Naive thymus-derived CD4-positive, alpha-beta T cell (primary cell): ENCODE measurements at regions of chr5 and their contacts with region 1.

Region 1: GRCh38 chr5:77645158-77645994 is 6.9 kb upstream of the OTP start:
- DNase-seq: peak in 2 of 9 donors; percentile 51 to 66
- ATAC-seq: peak; percentile 83
- H3K4me3 ChIP-seq: no peak overlapping the region
- H3K4me3 Mint-ChIP-seq: peak overlapping the region; percentile 45 to 83 (median 72)
- H3K27ac ChIP-seq: no peak overlapping the region
- H3K27ac Mint-ChIP-seq: peak overlapping the region in 1 of 9 donors; percentile 12
- H3K4me1 ChIP-seq: peaks cover 7 to 9% of the 10 kb centered on the region in 2 donors
- H3K4me1 Mint-ChIP-seq: peaks cover 13 to 29% (median 19%) of the 10 kb centered on the region in 7 donors
- H3K27me3 ChIP-seq: peaks cover 17 to 43% of the 10 kb centered on the region in 2 donors
- H3K27me3 Mint-ChIP-seq: peaks cover 92 to 95% (median 94%) of the 10 kb centered on the region in 5 donors

Region 2: DNA sequence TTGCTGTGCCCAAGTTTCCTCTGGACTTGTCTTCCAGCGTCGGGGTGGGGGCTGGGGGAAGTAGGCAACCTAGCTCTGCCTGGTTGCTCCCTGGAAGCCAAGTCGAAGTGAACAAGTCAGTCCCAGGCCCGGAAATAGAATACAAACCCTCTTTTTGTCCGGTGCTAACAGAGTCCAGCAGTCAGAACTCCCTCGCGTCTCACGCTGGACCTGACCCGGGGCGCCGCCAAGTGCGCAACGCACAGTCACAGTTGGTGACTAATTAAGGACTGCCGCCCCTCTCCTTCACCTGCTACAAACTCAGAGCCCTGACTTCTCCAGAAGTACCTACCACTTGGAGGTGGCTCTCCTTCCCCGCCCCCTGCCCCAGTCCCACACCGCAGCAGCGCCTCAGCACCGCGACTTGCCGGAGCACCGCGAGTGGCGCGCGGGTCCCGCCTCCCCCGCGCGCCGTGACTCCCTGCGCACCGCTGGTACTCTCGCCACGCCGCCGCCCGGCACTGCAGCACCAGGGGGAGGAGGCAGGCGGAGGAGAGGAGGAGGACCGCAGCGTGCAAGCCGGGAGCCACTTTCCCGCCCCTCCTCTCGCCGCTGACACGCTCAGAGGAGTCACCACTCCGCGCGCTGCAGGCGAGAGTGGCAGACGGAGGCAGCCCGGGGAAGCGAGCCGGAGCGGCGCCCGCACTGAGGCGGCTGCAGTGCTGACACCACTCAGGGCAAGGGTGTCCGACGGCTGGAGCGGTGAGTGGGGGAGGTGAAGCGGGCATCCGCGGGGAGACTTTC is 1562.4 kb before region 1 on chr5 and contains the start of gene SV2C:
- CTCF ChIA-PET with region 1: no interaction called
- POLR2A ChIA-PET with region 1: no interaction called
- intact Hi-C with region 1: loop called in 1 of 2 experiments (anchors 10 kb)
- DNase-seq: peak in 2 of 9 donors; percentile 16 to 52
- ATAC-seq: peak; percentile 22
- H3K4me3 ChIP-seq: no peak within 1 kb of the TSS
- H3K4me3 Mint-ChIP-seq: peak within 1 kb of the TSS; percentile 21 to 80 (median 66)
- H3K27ac ChIP-seq: no peak within 1 kb of the TSS
- H3K27ac Mint-ChIP-seq: peak within 1 kb of the TSS in 1 of 9 donors; percentile 23
- H3K4me1 ChIP-seq: peaks cover 6 to 11% of the 10 kb centered on the region in 2 donors
- H3K4me1 Mint-ChIP-seq: peaks cover 16 to 36% (median 23%) of the 10 kb centered on the region in 7 donors
- H3K27me3 ChIP-seq: peaks cover 0 to 2% of the 10 kb centered on the region in 2 donors
- H3K27me3 Mint-ChIP-seq: peaks cover 70 to 89% (median 77%) of the 10 kb centered on the region in 5 donors
- total RNA-seq, gene SV2C: not detected

Region 3: GRCh38 chr5:77607324-77607723 is 38.1 kb before region 1 on chr5:
- CTCF ChIA-PET with region 1: no interaction called
- POLR2A ChIA-PET with region 1: no interaction called
- intact Hi-C with region 1: no loop called
- DNase-seq: no peak
- ATAC-seq: no peak
- H3K4me3 ChIP-seq: no peak overlapping the region
- H3K4me3 Mint-ChIP-seq: no peak overlapping the region
- H3K27ac ChIP-seq: no peak overlapping the region
- H3K27ac Mint-ChIP-seq: no peak overlapping the region
- H3K4me1 ChIP-seq: no peaks in the 10 kb centered on the region
- H3K4me1 Mint-ChIP-seq: no peaks in the 10 kb centered on the region
- H3K27me3 ChIP-seq: peaks cover 0 to 4% of the 10 kb centered on the region in 2 donors
- H3K27me3 Mint-ChIP-seq: peaks cover 22 to 63% (median 57%) of the 10 kb centered on the region in 5 donors

Region 4: DNA sequence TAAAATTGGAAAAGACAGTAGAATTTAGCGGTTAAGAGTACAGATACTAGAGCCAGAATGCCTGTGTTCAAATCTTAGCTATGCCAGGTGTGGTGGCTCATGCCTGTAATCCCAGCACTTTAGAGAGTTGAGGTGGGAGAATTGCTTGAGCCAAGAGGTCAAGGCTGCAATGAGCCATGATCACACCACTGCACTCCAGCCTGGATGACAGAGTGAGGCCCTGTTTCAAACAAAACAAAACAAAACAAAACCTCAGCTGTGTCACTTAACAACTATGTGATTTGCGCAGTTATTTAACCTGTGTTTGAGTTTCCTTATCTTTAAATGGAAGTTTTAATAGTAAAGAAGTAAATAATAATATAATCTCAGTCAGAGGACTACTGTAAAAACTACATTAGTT is 62.4 kb after region 1 on chr5:
- CTCF ChIA-PET with region 1: no interaction called
- POLR2A ChIA-PET with region 1: no interaction called
- intact Hi-C with region 1: no loop called
- DNase-seq: no peak
- ATAC-seq: no peak
- H3K4me3 ChIP-seq: no peak overlapping the region
- H3K4me3 Mint-ChIP-seq: no peak overlapping the region
- H3K27ac ChIP-seq: no peak overlapping the region
- H3K27ac Mint-ChIP-seq: no peak overlapping the region
- H3K4me1 ChIP-seq: peaks cover 0 to 4% of the 10 kb centered on the region in 2 donors
- H3K4me1 Mint-ChIP-seq: peaks cover 0 to 10% (median 4%) of the 10 kb centered on the region in 7 donors
- H3K27me3 ChIP-seq: no peaks in the 10 kb centered on the region
- H3K27me3 Mint-ChIP-seq: no peaks in the 10 kb centered on the region

Region 5: GRCh38 chr5:77852514-77853352 is 207.4 kb after region 1 on chr5:
- CTCF ChIA-PET with region 1: no interaction called
- POLR2A ChIA-PET with region 1: no interaction called
- intact Hi-C with region 1: loop called (anchors 5 to 10 kb)
- DNase-seq: peak in 8 of 9 donors; percentile 6 to 45 (median 30)
- ATAC-seq: peak; percentile 79
- H3K4me3 ChIP-seq: peak overlapping the region; percentile 42
- H3K4me3 Mint-ChIP-seq: peak overlapping the region; percentile 79 to 92 (median 84)
- H3K27ac ChIP-seq: no peak overlapping the region
- H3K27ac Mint-ChIP-seq: peak overlapping the region in 8 of 9 donors; percentile 2 to 86 (median 48)
- H3K4me1 ChIP-seq: peaks cover 0 to 13% of the 10 kb centered on the region in 2 donors
- H3K4me1 Mint-ChIP-seq: peaks cover 10 to 30% (median 18%) of the 10 kb centered on the region in 7 donors
- H3K27me3 ChIP-seq: no peaks in the 10 kb centered on the region
- H3K27me3 Mint-ChIP-seq: peaks cover 16 to 74% (median 55%) of the 10 kb centered on the region in 5 donors

Region 6: DNA sequence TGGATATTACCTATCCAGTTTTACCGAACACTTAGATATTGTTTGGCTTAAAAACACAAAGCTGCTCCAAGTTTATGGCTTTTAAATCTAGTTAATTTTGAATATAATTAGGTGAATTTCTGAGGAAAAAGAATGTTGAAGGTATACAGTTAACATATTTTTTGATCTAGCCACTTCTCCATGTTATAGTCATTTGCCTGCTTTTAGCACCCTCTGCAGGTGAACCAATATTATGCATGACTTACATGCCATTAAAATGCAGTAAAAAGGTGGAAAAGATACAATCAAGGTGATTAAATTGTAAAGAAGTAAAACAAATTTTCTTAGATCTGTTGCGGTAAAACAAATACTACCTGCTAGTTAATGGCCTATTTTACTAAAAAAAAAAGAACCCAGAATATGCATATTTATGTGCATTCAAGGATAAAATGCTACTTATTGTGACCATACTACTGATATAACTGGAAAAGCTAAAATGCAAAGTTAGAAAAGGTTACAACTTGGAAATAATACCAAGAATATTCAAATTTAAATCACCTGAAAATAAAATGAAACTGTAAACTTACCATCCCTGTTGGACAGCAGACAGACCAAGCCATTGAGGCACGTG is 517.0 kb after region 1 on chr5:
- CTCF ChIA-PET with region 1: no interaction called
- POLR2A ChIA-PET with region 1: no interaction called
- intact Hi-C with region 1: loop called in 1 of 2 experiments (anchors 2 kb)
- DNase-seq: peak in 5 of 9 donors; percentile 5 to 20 (median 13)
- ATAC-seq: no peak
- H3K4me3 ChIP-seq: no peak overlapping the region
- H3K4me3 Mint-ChIP-seq: no peak overlapping the region
- H3K27ac ChIP-seq: no peak overlapping the region
- H3K27ac Mint-ChIP-seq: no peak overlapping the region
- H3K4me1 ChIP-seq: no peaks in the 10 kb centered on the region
- H3K4me1 Mint-ChIP-seq: no peaks in the 10 kb centered on the region
- H3K27me3 ChIP-seq: no peaks in the 10 kb centered on the region
- H3K27me3 Mint-ChIP-seq: no peaks in the 10 kb centered on the region

Region 7: DNA sequence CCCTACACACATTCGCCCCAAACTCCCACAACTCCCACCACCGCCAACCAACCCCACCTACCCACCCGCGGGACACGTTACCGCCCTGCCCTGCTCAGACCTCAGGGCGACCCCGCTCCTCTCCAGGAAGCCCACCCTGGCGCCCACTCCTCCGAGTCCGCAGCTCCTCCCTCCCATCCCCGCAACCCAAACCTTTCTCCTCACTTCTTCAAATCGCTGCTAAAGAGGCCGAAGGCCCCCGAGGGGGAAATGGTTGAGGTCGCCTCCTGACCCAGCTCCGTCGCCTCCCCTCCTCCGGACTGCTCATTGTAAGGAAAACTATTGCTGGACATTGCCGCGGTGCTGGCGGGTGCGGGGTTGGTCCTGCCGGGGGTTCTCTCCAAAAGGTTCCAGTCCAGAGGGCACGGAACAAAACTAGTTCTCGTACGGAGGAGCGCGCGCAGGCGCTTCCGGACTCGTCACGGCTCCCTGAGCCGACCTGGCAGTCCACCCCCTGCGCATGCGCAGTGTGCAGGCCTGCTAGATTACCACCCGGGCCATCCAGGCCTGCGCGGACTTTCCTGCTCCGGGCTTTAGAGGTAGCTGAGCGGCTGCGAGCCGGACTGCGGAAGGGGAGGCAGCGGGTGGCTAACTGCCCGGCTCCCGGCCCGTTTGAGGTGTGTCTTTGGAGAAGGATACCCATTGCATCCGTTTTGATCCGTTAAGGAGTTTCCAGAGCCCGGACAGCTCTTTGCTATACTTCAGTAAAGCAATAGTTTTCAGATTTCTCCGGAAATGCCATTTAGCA is 649.1 kb after region 1 on chr5 and contains the start of gene AP3B1:
- CTCF ChIA-PET with region 1: no interaction called
- POLR2A ChIA-PET with region 1: no interaction called
- intact Hi-C with region 1: loop called (anchors 10 kb)
- DNase-seq: peak; percentile 94 to 98 (median 96)
- ATAC-seq: peak; percentile 97
- H3K4me3 ChIP-seq: peak within 1 kb of the TSS; percentile 98
- H3K4me3 Mint-ChIP-seq: peak within 1 kb of the TSS; percentile 86 to 100 (median 98)
- H3K27ac ChIP-seq: peak within 1 kb of the TSS; percentile 88
- H3K27ac Mint-ChIP-seq: peak within 1 kb of the TSS; percentile 77 to 99 (median 97)
- H3K4me1 ChIP-seq: peaks cover 5 to 9% of the 10 kb centered on the region in 2 donors
- H3K4me1 Mint-ChIP-seq: peaks cover 27 to 50% (median 46%) of the 10 kb centered on the region in 7 donors
- H3K27me3 ChIP-seq: no peaks in the 10 kb centered on the region
- H3K27me3 Mint-ChIP-seq: peaks cover 0 to 11% (median 0%) of the 10 kb centered on the region in 5 donors
- total RNA-seq, gene AP3B1: 30.2 to 45.0 (median 37.2) TPM

Region 8: GRCh38 chr5:78661691-78662090 is 1016.3 kb after region 1 on chr5:
- CTCF ChIA-PET with region 1: no interaction called
- POLR2A ChIA-PET with region 1: no interaction called
- intact Hi-C with region 1: no loop called
- DNase-seq: no peak
- ATAC-seq: no peak
- H3K4me3 ChIP-seq: no peak overlapping the region
- H3K4me3 Mint-ChIP-seq: no peak overlapping the region
- H3K27ac ChIP-seq: no peak overlapping the region
- H3K27ac Mint-ChIP-seq: no peak overlapping the region
- H3K4me1 ChIP-seq: no peaks in the 10 kb centered on the region
- H3K4me1 Mint-ChIP-seq: no peaks in the 10 kb centered on the region
- H3K27me3 ChIP-seq: no peaks in the 10 kb centered on the region
- H3K27me3 Mint-ChIP-seq: peaks cover 18 to 29% (median 24%) of the 10 kb centered on the region in 5 donors